WTC11 (cell line): ENCODE measurements at regions of chr19 and their contacts with region 1.

Region 1: DNA sequence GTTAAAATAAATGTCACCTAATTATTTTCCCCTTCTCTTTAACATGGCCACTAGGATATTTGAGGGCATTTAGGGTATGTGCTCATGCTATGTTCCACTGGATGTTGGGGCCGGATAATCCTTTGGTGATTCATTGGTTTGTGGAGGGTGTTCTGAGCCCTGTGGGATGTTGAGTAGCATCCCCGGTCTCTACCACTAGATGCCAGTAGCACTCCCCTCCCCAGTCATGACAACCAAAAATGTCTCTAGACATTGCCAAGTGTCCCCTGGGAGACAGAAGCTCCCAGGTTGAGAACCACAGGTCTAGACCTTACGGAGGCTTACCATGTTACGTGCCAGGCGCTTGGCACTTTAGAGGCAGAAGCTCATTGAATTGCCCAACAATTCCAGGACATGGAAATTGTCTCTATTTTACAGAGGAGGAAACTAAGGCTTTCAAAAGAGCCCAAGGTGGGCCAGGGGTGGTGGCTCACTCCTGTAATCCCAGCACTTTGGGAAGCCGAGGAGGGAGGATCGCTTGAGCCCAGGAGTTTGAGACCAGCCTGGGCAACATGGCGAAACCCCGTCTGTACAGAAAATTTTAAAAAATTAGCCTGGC is 14.1 kb downstream of the SHANK1 start:
- DNase-seq: peak; percentile 62
- ATAC-seq: peak; percentile 82
- H3K4me3 Mint-ChIP-seq: no peak overlapping the region
- H3K27ac Mint-ChIP-seq: no peak overlapping the region
- H3K4me1 Mint-ChIP-seq: peaks cover 9% of the 10 kb centered on the region; the same call in 1 of the 2 replicates
- H3K27me3 Mint-ChIP-seq: peaks cover 38% of the 10 kb centered on the region
- CTCF ChIP-seq: peak; percentile 37

Region 2: GRCh38 chr19:50628146-50628545 is 77.4 kb before region 1 on chr19:
- CTCF ChIA-PET with region 1: interaction called, 10 read pairs
- POLR2A ChIA-PET with region 1: no interaction called
- DNase-seq: no peak
- ATAC-seq: no peak; the same call in 1 of the 2 replicates
- H3K4me3 Mint-ChIP-seq: no peak overlapping the region
- H3K27ac Mint-ChIP-seq: no peak overlapping the region
- H3K4me1 Mint-ChIP-seq: no peaks in the 10 kb centered on the region
- H3K27me3 Mint-ChIP-seq: peaks cover 4% of the 10 kb centered on the region
- CTCF ChIP-seq: no peak

Region 3: DNA sequence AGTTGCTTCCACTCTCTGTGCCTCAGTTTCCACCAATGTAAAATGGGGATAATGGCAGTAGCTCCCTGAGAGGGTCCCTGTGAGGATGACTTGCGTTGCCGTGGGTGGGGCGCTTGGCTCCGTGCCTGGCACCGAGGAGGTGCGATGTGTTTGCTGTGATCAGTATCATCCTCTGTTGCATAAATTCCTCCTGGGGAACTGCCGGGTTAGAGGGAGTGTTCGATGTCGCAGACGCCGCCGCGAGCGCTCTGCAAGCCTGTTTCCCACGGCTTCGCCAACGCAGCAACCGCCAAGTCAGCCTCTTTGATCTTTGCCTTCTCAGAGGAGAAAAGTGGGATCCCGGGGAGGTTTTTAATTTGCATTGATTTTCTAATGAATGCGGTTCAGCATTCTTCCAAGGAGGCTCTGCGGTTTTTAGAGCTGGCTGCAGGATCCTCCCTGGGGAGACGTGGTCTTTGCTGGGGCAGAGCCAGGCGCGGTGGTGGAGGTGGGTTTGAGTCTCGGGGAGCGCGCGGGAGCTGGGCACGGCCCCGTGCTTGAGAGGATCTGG is 72.3 kb after region 1 on chr19:
- CTCF ChIA-PET with region 1: interaction called, 184 read pairs
- POLR2A ChIA-PET with region 1: no interaction called
- DNase-seq: peak; percentile 71
- ATAC-seq: peak; percentile 54
- H3K4me3 Mint-ChIP-seq: peak overlapping the region; percentile 59
- H3K27ac Mint-ChIP-seq: 0 out of 2 replicates have a peak overlapping the region, but pooled peaks have one; percentile 51
- H3K4me1 Mint-ChIP-seq: peaks cover 24% of the 10 kb centered on the region
- H3K27me3 Mint-ChIP-seq: peaks cover 95% of the 10 kb centered on the region
- CTCF ChIP-seq: no peak

Region 4: DNA sequence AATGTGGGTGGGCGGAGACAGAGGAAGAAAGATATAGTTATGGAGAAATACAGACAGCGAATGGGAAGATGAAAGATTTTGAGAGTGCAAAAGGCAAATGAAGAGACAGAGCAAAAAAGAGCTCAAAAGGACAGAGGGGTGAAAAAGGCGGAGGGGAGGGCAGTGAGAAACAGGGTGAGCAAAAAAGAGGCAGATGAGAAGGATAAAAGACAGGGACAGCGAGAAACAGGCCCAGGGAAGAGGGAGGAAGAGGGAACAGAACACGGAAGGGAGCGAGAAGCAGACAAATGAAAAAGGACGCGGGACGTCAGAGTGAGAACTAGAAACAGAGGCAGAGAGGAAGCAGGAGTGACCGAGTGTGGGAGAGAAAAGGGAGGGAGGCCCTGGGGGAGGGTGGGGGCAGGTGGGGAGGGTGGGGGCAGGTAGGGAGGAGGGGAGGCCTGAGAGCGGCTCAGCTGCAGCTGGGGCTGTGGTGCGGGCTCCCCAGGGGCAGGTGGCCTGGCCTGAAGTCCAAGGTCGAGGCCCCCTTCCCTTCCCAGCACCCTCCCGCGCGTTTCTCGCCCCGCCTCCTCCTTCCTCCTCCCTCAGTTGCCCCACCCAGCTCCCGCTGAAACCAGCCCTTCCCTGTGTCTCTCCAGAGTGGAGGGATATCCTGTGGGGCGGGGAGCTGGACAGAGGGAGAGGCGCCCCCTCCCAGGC is 115.2 kb after region 1 on chr19:
- CTCF ChIA-PET with region 1: no interaction called
- POLR2A ChIA-PET with region 1: no interaction called
- DNase-seq: no peak
- ATAC-seq: peak; percentile 15
- H3K4me3 Mint-ChIP-seq: peak overlapping the region; percentile 77
- H3K27ac Mint-ChIP-seq: no peak overlapping the region
- H3K4me1 Mint-ChIP-seq: peaks cover 37% of the 10 kb centered on the region
- H3K27me3 Mint-ChIP-seq: peaks cover 88% of the 10 kb centered on the region
- CTCF ChIP-seq: no peak

Region 5: DNA sequence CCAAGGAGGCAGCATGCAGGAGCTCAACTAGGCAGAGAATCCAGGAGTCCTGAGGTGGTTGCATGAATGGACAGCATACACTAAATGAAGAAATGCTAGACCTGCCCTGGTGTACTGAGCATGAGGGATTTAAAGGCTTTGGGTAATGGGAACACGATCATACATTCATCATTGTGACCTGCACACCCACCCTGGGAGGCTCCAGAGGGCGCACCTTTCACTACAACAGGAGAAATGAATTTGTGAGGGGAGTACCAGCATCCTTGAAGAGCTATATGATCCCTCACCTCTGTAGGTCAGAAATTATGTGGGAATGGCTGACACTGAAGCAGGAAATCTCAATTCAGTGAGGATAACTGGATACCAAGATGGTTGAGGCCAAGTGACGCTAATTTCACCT is 176.7 kb after region 1 on chr19:
- CTCF ChIA-PET with region 1: no interaction called
- POLR2A ChIA-PET with region 1: no interaction called
- DNase-seq: no peak
- ATAC-seq: peak; percentile 34
- H3K4me3 Mint-ChIP-seq: no peak overlapping the region
- H3K27ac Mint-ChIP-seq: no peak overlapping the region
- H3K4me1 Mint-ChIP-seq: peaks cover under 1% of the 10 kb centered on the region; the same call in 1 of the 2 replicates
- H3K27me3 Mint-ChIP-seq: peaks cover 37% of the 10 kb centered on the region
- CTCF ChIP-seq: no peak